Activated T-helper 2 cell treated with anti-CD3 and anti-CD28 coated beads, Interferon-gamma antibody, Interleukin-2, Interleukin-4, amounts not matched to agents 10 μg/mL and 5 μg/mL and 100 μg/mL, durations not matched to agents 14 hours and 24 hours and 36 hours (primary cell): ENCODE measurements at regions of chr5 and their contacts with region 1.

Region 1: GRCh38 chr5:168227973-168228615 is 63.4 kb upstream of the WWC1 start:
- DNase-seq: peak; percentile 24
- H3K4me3 Mint-ChIP-seq: peak overlapping the region; percentile 4
- H3K27ac Mint-ChIP-seq: peak overlapping the region; percentile 21
- H3K4me1 Mint-ChIP-seq: peaks cover 24% of the 10 kb centered on the region
- H3K27me3 Mint-ChIP-seq: peaks cover 28% of the 10 kb centered on the region

Region 2: DNA sequence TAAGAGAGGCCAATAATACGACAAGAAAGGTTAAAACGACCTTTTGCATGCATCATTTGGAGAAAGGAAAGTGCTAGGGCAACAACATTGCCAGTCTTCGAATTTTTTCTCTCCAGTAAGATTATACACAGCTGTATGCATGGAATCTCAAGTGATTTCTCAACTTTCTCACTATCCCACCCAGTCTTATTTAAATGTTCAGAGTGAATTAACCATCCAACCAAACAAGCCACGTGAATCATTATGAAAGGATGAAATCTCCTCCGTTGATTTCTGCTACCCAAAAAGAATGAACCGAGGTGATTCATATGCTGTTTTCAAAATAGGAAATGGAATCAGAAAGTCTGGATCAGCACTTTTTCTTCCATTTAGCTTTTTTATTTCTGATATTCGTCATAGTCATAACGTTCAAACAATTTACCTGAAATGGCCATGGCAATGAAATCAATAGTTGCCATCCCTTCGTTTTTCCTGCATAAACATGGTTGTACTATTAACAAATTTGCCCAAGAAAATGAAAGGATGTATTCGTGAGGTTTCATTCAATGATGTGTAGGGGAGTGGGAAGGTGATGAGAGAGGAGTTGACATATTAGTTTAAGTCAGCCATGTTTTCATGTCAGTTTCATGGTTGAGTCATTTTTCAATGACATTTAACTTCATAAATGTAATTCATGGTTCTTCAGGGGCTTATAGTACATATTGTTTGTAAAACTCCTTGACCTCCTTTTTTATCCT is 107.5 kb before region 1 on chr5:
- intact Hi-C with region 1: loop called (anchors 2 kb)
- DNase-seq: no peak
- H3K4me3 Mint-ChIP-seq: no peak overlapping the region
- H3K27ac Mint-ChIP-seq: peak overlapping the region; percentile 50
- H3K4me1 Mint-ChIP-seq: peaks cover 27% of the 10 kb centered on the region
- H3K27me3 Mint-ChIP-seq: peaks cover 1% of the 10 kb centered on the region

Region 3: GRCh38 chr5:168249923-168250322 is 21.8 kb after region 1 on chr5:
- intact Hi-C with region 1: loop called (anchors 1 kb)
- DNase-seq: no peak
- H3K4me3 Mint-ChIP-seq: no peak overlapping the region
- H3K27ac Mint-ChIP-seq: no peak overlapping the region
- H3K4me1 Mint-ChIP-seq: peaks cover 12% of the 10 kb centered on the region
- H3K27me3 Mint-ChIP-seq: peaks cover 1% of the 10 kb centered on the region

Region 4: GRCh38 chr5:168409580-168410458 is 181.7 kb after region 1 on chr5:
- intact Hi-C with region 1: loop called (anchors 5 kb)
- DNase-seq: peak; percentile 10
- H3K4me3 Mint-ChIP-seq: peak overlapping the region; percentile 14
- H3K27ac Mint-ChIP-seq: no peak overlapping the region
- H3K4me1 Mint-ChIP-seq: peaks cover 22% of the 10 kb centered on the region
- H3K27me3 Mint-ChIP-seq: peaks cover 58% of the 10 kb centered on the region